Cardiac septum (tissue), 1 donor: ENCODE measurements at regions of chr5 and their contacts with region 1.

Region 1: DNA sequence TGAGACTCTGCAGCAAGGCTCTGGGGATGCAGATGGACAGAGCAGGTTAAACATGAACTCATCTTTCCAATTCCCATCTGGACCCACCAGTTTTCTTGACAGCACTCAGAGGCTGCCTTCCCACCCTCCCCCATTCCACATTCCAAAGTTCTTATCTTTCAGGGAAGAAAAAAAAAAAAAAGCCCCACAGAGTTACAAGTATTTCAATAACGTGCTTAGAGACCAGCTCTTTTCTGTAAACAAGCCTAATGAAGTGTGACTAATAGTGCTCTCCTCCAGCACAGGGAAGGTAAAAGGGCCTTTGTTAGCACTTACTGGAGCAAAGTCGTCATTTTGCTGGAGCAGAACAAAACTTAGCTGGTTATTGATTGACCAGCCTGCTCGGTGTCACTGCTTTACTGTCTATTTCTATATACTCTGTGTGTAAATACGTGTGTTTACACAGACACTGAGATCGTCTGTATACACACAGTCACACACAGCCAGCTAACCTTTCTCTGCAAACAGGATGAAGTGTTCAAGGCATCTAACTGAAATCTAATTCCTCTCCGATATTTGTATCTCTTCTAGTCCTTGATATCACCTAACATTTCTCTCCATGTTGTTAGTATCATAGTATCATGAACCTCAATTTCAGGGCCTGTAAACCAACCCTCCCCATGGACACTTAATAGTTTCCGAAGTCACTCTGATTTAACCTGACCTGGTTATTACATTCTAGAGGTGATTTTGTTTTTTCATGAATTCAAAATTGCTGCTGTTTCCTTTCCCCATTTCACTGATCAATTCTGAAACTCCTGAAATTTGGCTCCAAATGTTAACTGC is 84.9 kb downstream of the ZNF608 start:
- DNase-seq: no peak

Region 2: GRCh38 chr5:124697933-124698591 is 36.5 kb after region 1 on chr5:
- intact Hi-C with region 1: loop called (anchors 5 kb)
- DNase-seq: no peak